ENCODE measurements at regions of chr17 and their contacts with region 1.

Region 1: GRCh38 chr17:75904749-75905521 is at the start of gene MRPL38:
- DNase-seq: peak; percentile 97
- H3K4me3 ChIP-seq: peak within 1 kb of the TSS; percentile 71 to 88 (median 84)
- H3K27ac ChIP-seq: peak within 1 kb of the TSS; percentile 92 to 96 (median 93)
- H3K4me1 ChIP-seq: peaks cover 11 to 19% (median 17%) of the 10 kb centered on the region in 4 donors
- H3K27me3 ChIP-seq: no peaks in the 10 kb centered on the region
- CTCF ChIP-seq: peak; percentile 96 to 100 (median 98)
- EP300 ChIP-seq: no peak
- POLR2A ChIP-seq: peak; percentile 59
- total RNA-seq, gene MRPL38: 40.6 to 117 (median 48.5) TPM

Region 2: DNA sequence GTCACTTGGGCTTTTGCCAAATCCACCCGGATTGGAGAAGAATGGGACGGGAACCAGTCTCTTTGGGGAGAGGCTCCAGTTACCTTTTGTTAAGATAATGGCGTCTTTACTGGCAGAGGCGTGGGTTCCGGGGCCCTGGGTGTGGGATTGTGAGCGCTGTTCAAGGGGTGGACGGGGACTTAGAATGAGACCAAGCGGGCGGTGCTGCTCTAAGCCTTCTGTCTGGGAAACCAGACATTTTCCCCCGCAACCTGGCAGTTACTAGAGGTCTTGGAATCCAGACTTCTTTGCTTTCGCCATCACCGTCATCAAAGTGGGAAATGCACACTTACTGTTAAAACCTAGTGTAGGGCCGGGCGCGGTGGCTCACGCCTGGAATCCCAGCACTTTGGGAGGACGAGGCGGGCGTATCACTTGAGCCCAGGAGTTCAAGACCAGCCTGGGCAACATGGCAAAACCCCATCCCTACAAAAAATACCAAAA is 74.8 kb after region 1 on chr17:
- in situ Hi-C with region 1: loop called in 1 of 4 experiments (anchors 10 kb)
- intact Hi-C with region 1: no loop called
- DNase-seq: no peak
- H3K4me3 ChIP-seq: peak overlapping the region; percentile 12 to 84 (median 75)
- H3K27ac ChIP-seq: peak overlapping the region; percentile 97 to 98 (median 98)
- H3K4me1 ChIP-seq: peaks cover 0 to 55% (median 44%) of the 10 kb centered on the region in 4 donors
- H3K27me3 ChIP-seq: no peaks in the 10 kb centered on the region
- CTCF ChIP-seq: no peak
- EP300 ChIP-seq: no peak
- POLR2A ChIP-seq: no peak

Region 3: DNA sequence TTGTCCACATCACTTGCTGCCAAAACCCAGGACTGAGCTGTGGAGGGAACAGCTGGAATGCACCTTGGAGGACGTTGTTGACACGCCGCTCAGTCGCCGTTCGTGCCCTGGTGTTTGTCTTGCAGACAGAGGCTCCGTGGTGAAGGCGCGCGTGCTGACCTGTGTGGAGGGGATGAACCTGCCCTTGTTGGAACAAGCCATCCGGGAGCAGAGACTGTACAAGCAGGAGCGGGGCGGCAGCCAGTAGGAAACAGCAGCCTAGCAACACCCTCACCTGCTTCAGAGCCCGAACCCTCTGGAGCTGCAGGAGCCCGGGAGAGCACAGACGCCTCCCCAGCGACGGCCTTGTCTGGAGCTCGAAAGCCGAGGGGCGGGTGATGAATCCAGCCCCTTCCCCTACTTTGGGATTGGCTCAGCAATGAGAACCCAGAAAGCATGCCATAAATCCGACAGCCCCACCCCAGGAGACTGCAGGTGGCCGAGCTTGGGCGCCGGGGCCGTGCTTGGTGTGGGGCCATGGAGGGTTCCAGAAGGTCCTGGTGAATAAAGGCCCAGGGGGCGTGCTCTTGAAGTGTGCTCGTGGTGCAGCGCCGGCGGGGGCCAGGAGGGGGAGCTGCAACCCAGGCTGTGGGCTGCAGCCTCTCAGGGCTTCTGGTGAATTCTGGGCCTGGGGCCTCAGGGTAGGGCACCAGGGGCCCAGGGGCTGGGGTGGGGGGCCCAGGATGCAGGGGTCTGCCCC is 95.2 kb after region 1 on chr17:
- in situ Hi-C with region 1: loop called (anchors 5 to 10 kb)
- intact Hi-C with region 1: loop called (anchors 5 kb)
- DNase-seq: peak; percentile 81
- H3K4me3 ChIP-seq: no peak overlapping the region
- H3K27ac ChIP-seq: peak overlapping the region; percentile 84 to 91 (median 87)
- H3K4me1 ChIP-seq: peaks cover 13 to 92% (median 65%) of the 10 kb centered on the region in 4 donors
- H3K27me3 ChIP-seq: no peaks in the 10 kb centered on the region
- CTCF ChIP-seq: peak; percentile 72 to 90 (median 82)
- EP300 ChIP-seq: no peak
- POLR2A ChIP-seq: no peak

Region 4: GRCh38 chr17:76005263-76006149 is 100.6 kb after region 1 on chr17:
- in situ Hi-C with region 1: loop called in 3 of 4 experiments (anchors 5 to 10 kb)
- intact Hi-C with region 1: loop called (anchors 5 kb)
- DNase-seq: peak; percentile 90
- H3K4me3 ChIP-seq: no peak overlapping the region
- H3K27ac ChIP-seq: peak overlapping the region; percentile 1 to 64 (median 44)
- H3K4me1 ChIP-seq: peaks cover 2 to 48% (median 25%) of the 10 kb centered on the region in 4 donors
- H3K27me3 ChIP-seq: no peaks in the 10 kb centered on the region
- CTCF ChIP-seq: peak; percentile 74 to 92 (median 82)
- EP300 ChIP-seq: no peak
- POLR2A ChIP-seq: no peak

Region 5: GRCh38 chr17:76182016-76182764 is 277.3 kb after region 1 on chr17:
- in situ Hi-C with region 1: loop called in 1 of 4 experiments (anchors 25 kb)
- intact Hi-C with region 1: no loop called
- DNase-seq: peak; percentile 93
- H3K4me3 ChIP-seq: no peak overlapping the region
- H3K27ac ChIP-seq: no peak overlapping the region
- H3K4me1 ChIP-seq: peaks cover 0 to 7% (median 3%) of the 10 kb centered on the region in 4 donors
- H3K27me3 ChIP-seq: no peaks in the 10 kb centered on the region
- CTCF ChIP-seq: peak; percentile 78 to 92 (median 88)
- EP300 ChIP-seq: no peak
- POLR2A ChIP-seq: no peak

Measured in transverse colon (tissue), 4 donors.